GM12878 (cell line): ENCODE measurements at regions of chr16 and their contacts with region 1.

Region 1: DNA sequence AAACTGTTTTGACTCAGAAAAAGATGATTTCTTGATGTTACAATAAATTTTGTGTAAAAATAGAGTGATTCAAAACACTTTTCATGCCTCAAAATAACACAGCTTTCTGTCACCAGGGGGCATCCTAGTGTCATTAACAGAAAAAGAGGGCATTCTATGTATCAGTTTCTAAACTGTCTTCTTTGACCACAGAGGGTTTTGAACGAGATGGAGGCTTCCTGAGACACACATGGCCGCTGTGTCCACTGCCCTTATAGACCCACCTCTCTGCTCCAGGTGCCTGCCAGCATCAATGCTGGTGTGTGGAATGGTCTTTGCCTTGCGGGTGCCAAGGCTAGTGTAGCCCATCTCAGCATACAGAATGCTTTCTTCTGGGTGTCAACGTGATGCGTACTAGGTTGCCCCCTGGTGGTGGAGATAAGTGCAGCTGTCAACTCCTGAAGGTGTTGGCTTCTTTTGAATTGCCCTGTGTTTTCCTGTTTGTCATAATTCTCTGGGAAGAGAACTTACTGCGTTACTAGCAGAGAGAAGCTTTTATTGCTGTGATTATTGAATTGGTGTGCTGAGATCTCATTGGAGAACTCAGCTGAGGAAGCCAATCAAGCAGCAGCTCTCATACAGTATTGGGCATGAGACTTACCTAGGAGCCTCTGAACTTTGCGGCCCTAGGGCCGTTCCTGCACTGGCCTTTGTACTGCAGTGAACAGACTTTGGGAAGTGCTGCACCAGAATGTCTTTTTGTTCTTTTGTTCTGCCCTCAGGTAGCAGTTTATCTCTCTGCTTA is 38.6 kb downstream of the USP10 start:
- DNase-seq: peak; percentile 71
- ATAC-seq: peak; percentile 95
- H3K4me3 ChIP-seq: no peak overlapping the region
- H3K27ac ChIP-seq: no peak overlapping the region
- H3K4me1 ChIP-seq: peaks cover 14% of the 10 kb centered on the region
- H3K27me3 ChIP-seq: no peaks in the 10 kb centered on the region
- CTCF ChIP-seq: peak; percentile 82 to 96 (median 83)
- EP300 ChIP-seq: no peak
- POLR2A ChIP-seq: no peak
- RAD21 ChIP-seq: peak; percentile 62

Region 2: DNA sequence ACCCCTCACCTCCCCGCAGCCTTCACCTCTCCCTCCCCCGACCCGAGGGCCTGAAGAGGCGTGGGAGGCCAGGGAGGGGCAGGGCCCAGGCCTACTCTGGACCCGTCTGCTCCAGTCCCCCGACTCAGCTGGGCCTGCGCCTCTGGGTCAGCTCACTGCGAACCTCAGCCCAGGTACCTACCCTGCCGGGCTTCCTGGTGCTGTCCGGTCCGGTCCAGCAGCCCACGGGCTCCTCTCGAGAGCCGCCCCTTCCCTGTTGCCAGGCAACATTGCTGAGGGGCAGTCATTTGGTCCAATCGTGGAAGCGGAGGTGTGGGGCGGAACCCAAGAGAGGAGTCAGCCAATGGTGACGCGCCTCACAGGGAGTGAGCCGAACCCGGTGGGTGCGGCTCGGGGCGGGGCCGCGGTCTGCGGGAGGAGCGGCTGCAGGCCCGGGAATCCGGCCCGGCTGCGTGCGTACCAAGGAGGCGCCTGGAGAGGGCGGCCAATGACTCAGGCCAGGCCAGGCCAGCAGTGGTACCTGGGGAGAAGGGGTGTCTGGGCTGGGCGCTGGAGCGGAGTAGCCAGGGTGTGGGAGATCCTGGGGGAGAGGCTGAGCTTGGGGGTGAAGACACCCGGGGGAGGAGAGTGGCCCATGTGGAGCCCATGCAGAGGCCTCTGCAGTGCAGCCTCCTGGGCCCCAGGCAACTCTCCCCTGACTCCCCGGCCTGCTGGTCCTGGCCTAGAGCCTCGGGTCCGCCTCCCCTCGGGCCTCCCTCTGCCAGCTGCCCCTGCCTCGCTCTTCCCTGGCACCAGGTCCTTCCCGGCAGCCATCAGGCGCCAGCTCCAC is 233.8 kb before region 1 on chr16 and contains the start of gene MEAK7:
- CTCF ChIA-PET with region 1: interaction called, 28 read pairs
- POLR2A ChIA-PET with region 1: no interaction called
- RAD21 ChIA-PET with region 1: interaction called, 3 read pairs
- SMC1A ChIA-PET with region 1: interaction called, 4 read pairs
- in situ Hi-C with region 1: no loop called
- intact Hi-C with region 1: no loop called
- DNase-seq: peak; percentile 86
- ATAC-seq: peak; percentile 91
- H3K4me3 ChIP-seq: peak within 1 kb of the TSS; percentile 88
- H3K27ac ChIP-seq: peak within 1 kb of the TSS; percentile 82
- H3K4me1 ChIP-seq: peaks cover 50% of the 10 kb centered on the region
- H3K27me3 ChIP-seq: no peaks in the 10 kb centered on the region
- CTCF ChIP-seq: peak in 1 of 3 experiments; percentile 13; a peak in 1 of 6 replicates
- EP300 ChIP-seq: no peak
- POLR2A ChIP-seq: peak; percentile 78
- RAD21 ChIP-seq: no peak
- polyA plus RNA-seq, gene MEAK7: 1.4 to 1.5 TPM

Region 3: DNA sequence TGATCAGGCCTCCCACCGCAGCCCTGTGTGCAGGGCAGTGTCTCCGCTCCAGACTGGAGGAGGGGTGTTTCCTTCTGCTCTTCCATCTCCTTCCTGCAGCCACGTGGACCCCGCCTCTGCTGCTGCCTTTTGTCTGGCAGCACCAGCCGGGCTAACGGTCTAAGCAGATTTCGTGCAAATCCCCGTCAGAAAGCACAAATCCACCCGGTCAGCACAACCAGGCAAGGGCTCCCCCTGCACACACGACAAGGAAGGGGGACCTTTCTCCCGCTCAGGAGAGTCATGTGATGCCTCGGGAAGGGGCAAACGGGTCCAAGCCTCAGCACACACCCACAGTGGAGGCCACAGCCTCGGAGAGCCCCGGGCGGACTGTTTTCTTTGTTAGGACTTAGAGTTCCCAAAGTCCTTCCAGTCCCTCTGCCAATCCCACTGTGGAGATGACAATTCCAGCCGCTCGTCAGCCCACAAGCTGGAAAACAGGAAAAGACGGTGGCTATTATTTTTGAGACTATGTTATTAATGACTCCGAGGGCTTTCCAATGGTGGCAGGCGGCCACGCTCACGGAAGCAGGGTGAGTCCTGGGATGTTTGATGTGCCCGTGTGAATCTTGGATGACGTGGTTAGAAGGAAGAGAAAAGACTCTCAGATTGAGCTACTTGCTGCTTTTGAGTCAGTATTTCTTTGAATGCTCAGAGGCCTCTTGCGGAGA is 211.5 kb before region 1 on chr16:
- CTCF ChIA-PET with region 1: no interaction called
- POLR2A ChIA-PET with region 1: no interaction called
- RAD21 ChIA-PET with region 1: no interaction called
- SMC1A ChIA-PET with region 1: no interaction called
- in situ Hi-C with region 1: no loop called
- intact Hi-C with region 1: no loop called
- DNase-seq: no peak
- ATAC-seq: no peak
- H3K4me3 ChIP-seq: no peak overlapping the region
- H3K27ac ChIP-seq: no peak overlapping the region
- H3K4me1 ChIP-seq: peaks cover 6% of the 10 kb centered on the region
- H3K27me3 ChIP-seq: no peaks in the 10 kb centered on the region
- CTCF ChIP-seq: no peak
- EP300 ChIP-seq: no peak
- POLR2A ChIP-seq: no peak
- RAD21 ChIP-seq: no peak

Region 4: GRCh38 chr16:84629580-84629979 is 108.9 kb before region 1 on chr16:
- CTCF ChIA-PET with region 1: interaction called, 112 read pairs
- POLR2A ChIA-PET with region 1: no interaction called
- RAD21 ChIA-PET with region 1: interaction called, 6 read pairs
- SMC1A ChIA-PET with region 1: interaction called, 4 read pairs
- in situ Hi-C with region 1: no loop called
- intact Hi-C with region 1: no loop called
- DNase-seq: no peak
- ATAC-seq: no peak
- H3K4me3 ChIP-seq: no peak overlapping the region
- H3K27ac ChIP-seq: no peak overlapping the region
- H3K4me1 ChIP-seq: peaks cover 29% of the 10 kb centered on the region
- H3K27me3 ChIP-seq: no peaks in the 10 kb centered on the region
- CTCF ChIP-seq: no peak
- EP300 ChIP-seq: no peak
- POLR2A ChIP-seq: no peak
- RAD21 ChIP-seq: no peak

Region 5: GRCh38 chr16:84672276-84673202 is 65.9 kb before region 1 on chr16:
- CTCF ChIA-PET with region 1: interaction called, 56 read pairs
- POLR2A ChIA-PET with region 1: no interaction called
- RAD21 ChIA-PET with region 1: interaction called, 12 read pairs
- SMC1A ChIA-PET with region 1: interaction called, 20 read pairs
- in situ Hi-C with region 1: no loop called
- intact Hi-C with region 1: loop called (anchors 1 kb)
- DNase-seq: no peak
- ATAC-seq: peak; percentile 98
- H3K4me3 ChIP-seq: no peak overlapping the region
- H3K27ac ChIP-seq: no peak overlapping the region
- H3K4me1 ChIP-seq: no peaks in the 10 kb centered on the region
- H3K27me3 ChIP-seq: no peaks in the 10 kb centered on the region
- CTCF ChIP-seq: peak; percentile 86 to 95 (median 93)
- EP300 ChIP-seq: no peak
- POLR2A ChIP-seq: no peak
- RAD21 ChIP-seq: peak; percentile 74

Region 6: DNA sequence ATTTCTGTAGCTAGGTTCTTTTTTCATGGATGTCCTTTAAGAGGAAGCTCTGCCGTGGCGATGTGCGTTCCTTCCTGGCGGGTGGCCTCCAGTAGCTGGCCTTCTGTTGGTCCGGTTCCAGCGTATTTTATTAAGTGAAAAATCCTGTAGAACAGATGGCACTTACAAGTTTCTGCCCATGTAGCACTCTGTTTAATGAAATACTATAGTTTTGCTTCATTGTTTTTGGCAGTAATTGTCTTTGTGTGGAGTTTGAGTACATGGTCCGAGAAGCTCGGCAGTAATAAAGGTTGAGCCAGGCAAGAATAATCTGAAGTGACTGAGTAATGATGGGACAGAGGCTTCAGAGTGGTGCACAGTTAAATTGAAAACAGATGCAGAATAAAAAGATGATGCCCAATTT is 18.3 kb before region 1 on chr16:
- CTCF ChIA-PET with region 1: interaction called, 196 read pairs
- POLR2A ChIA-PET with region 1: interaction called, 8 read pairs
- RAD21 ChIA-PET with region 1: interaction called, 35 read pairs
- SMC1A ChIA-PET with region 1: interaction called, 52 read pairs
- in situ Hi-C with region 1: no loop called
- intact Hi-C with region 1: no loop called
- DNase-seq: no peak
- ATAC-seq: no peak
- H3K4me3 ChIP-seq: no peak overlapping the region
- H3K27ac ChIP-seq: no peak overlapping the region
- H3K4me1 ChIP-seq: peaks cover 22% of the 10 kb centered on the region
- H3K27me3 ChIP-seq: no peaks in the 10 kb centered on the region
- CTCF ChIP-seq: no peak
- EP300 ChIP-seq: no peak
- POLR2A ChIP-seq: no peak
- RAD21 ChIP-seq: no peak

Region 7: GRCh38 chr16:84774810-84775209 is 36.4 kb after region 1 on chr16:
- CTCF ChIA-PET with region 1: interaction called, 16 read pairs
- POLR2A ChIA-PET with region 1: no interaction called
- RAD21 ChIA-PET with region 1: no interaction called
- SMC1A ChIA-PET with region 1: no interaction called
- in situ Hi-C with region 1: no loop called
- intact Hi-C with region 1: no loop called
- DNase-seq: no peak
- ATAC-seq: no peak
- H3K4me3 ChIP-seq: no peak overlapping the region
- H3K27ac ChIP-seq: no peak overlapping the region
- H3K4me1 ChIP-seq: no peaks in the 10 kb centered on the region
- H3K27me3 ChIP-seq: no peaks in the 10 kb centered on the region
- CTCF ChIP-seq: no peak
- EP300 ChIP-seq: no peak
- POLR2A ChIP-seq: no peak
- RAD21 ChIP-seq: no peak

Region 8: GRCh38 chr16:84864326-84864955 is 126.0 kb after region 1 on chr16:
- CTCF ChIA-PET with region 1: no interaction called
- POLR2A ChIA-PET with region 1: no interaction called
- RAD21 ChIA-PET with region 1: no interaction called
- SMC1A ChIA-PET with region 1: no interaction called
- in situ Hi-C with region 1: no loop called
- intact Hi-C with region 1: no loop called
- DNase-seq: no peak
- ATAC-seq: peak; percentile 37
- H3K4me3 ChIP-seq: no peak overlapping the region
- H3K27ac ChIP-seq: no peak overlapping the region
- H3K4me1 ChIP-seq: no peaks in the 10 kb centered on the region
- H3K27me3 ChIP-seq: peaks cover 0 to 5% of the 10 kb centered on the region in 2 experiments; a peak in 2 of 4 replicates
- CTCF ChIP-seq: no peak
- EP300 ChIP-seq: no peak
- POLR2A ChIP-seq: no peak
- RAD21 ChIP-seq: no peak

Region 9: GRCh38 chr16:84970447-84971127 is 232.1 kb after region 1 on chr16:
- CTCF ChIA-PET with region 1: interaction called, 95 read pairs
- POLR2A ChIA-PET with region 1: no interaction called
- RAD21 ChIA-PET with region 1: interaction called, 19 read pairs
- SMC1A ChIA-PET with region 1: interaction called, 13 read pairs
- in situ Hi-C with region 1: no loop called
- intact Hi-C with region 1: no loop called
- DNase-seq: peak; percentile 27
- ATAC-seq: peak; percentile 99
- H3K4me3 ChIP-seq: no peak overlapping the region
- H3K27ac ChIP-seq: no peak overlapping the region
- H3K4me1 ChIP-seq: no peaks in the 10 kb centered on the region
- H3K27me3 ChIP-seq: no peaks in the 10 kb centered on the region
- CTCF ChIP-seq: peak; percentile 89 to 92 (median 90)
- EP300 ChIP-seq: no peak
- POLR2A ChIP-seq: no peak
- RAD21 ChIP-seq: peak; percentile 82